Common myeloid progenitor, CD34-positive (primary cell): ENCODE measurements at regions of chr5 and their contacts with region 1.

Region 1: GRCh38 chr5:179763215-179763945 is 30.4 kb upstream of the LTC4S start:
- DNase-seq: peak; percentile 63 to 81 (median 78)
- H3K4me3 ChIP-seq: no peak overlapping the region
- H3K27ac ChIP-seq: no peak overlapping the region
- H3K4me1 ChIP-seq: peaks cover 17 to 75% (median 63%) of the 10 kb centered on the region in 4 experiments
- H3K27me3 ChIP-seq: no peaks in the 10 kb centered on the region

Region 2: DNA sequence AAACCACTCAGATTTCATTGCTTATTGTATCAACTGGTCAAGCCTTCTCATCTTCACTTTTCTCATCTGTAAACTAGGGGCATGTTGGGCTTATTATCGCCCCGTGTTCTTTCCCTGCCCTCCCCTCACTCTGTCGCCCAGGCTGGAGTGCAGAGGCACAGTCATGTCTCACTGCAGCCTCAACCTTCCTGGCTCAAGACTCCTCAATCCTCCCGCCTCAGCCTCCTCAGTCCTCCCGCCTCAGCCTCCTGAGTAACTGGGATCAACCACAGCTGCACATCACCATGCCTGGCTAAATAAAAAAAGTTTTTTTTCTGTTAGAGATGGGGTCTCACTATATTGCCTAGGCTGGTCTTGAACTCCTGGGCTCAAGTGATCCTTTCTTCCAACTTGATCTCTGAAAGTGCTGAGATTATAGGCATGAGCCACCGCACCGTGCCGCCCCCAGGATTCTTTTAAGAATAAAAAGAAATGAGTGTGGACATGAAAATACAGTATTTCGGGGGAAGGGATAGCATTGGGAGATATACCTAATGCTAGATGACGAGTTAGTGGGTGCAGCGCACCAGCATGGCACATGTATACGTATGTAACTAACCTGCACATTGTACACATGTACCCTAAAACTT is 28.7 kb before region 1 on chr5:
- CTCF ChIA-PET with region 1: interaction called, 24 read pairs
- POLR2A ChIA-PET with region 1: no interaction called
- DNase-seq: no peak
- H3K4me3 ChIP-seq: peak overlapping the region in 5 of 7 experiments; percentile 78 to 96 (median 94)
- H3K27ac ChIP-seq: peak overlapping the region in 1 of 2 experiments; percentile 93
- H3K4me1 ChIP-seq: peaks cover 14 to 29% (median 23%) of the 10 kb centered on the region in 4 experiments
- H3K27me3 ChIP-seq: no peaks in the 10 kb centered on the region

Region 3: GRCh38 chr5:179749857-179750508 is 13.4 kb before region 1 on chr5:
- CTCF ChIA-PET with region 1: interaction called, 26 read pairs
- POLR2A ChIA-PET with region 1: no interaction called
- DNase-seq: no peak
- H3K4me3 ChIP-seq: no peak overlapping the region
- H3K27ac ChIP-seq: no peak overlapping the region
- H3K4me1 ChIP-seq: peaks cover 0 to 4% (median 0%) of the 10 kb centered on the region in 4 experiments
- H3K27me3 ChIP-seq: no peaks in the 10 kb centered on the region

Region 4: DNA sequence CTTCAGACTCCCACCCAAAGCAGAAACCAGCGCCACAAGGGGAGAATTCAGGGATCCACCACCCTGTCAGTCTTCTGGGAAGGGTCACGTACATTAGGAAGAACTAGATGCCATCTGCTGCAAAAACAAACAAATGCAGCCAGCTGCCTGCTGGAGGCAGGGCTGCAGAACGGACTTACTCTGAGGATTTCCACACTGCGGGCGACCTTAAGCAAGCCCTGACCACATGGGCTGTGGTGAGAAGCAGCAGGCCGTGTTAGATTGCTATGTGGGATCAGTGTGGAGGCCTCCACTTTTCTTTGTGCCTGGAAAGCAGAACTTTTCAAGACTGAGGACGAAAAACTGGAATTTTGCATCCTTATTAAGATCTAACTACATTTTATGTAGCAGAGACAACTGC is 17.0 kb after region 1 on chr5:
- CTCF ChIA-PET with region 1: interaction called, 139 read pairs
- POLR2A ChIA-PET with region 1: no interaction called
- DNase-seq: no peak
- H3K4me3 ChIP-seq: no peak overlapping the region
- H3K27ac ChIP-seq: no peak overlapping the region
- H3K4me1 ChIP-seq: peaks cover 0 to 33% (median 10%) of the 10 kb centered on the region in 4 experiments
- H3K27me3 ChIP-seq: no peaks in the 10 kb centered on the region

Region 5: DNA sequence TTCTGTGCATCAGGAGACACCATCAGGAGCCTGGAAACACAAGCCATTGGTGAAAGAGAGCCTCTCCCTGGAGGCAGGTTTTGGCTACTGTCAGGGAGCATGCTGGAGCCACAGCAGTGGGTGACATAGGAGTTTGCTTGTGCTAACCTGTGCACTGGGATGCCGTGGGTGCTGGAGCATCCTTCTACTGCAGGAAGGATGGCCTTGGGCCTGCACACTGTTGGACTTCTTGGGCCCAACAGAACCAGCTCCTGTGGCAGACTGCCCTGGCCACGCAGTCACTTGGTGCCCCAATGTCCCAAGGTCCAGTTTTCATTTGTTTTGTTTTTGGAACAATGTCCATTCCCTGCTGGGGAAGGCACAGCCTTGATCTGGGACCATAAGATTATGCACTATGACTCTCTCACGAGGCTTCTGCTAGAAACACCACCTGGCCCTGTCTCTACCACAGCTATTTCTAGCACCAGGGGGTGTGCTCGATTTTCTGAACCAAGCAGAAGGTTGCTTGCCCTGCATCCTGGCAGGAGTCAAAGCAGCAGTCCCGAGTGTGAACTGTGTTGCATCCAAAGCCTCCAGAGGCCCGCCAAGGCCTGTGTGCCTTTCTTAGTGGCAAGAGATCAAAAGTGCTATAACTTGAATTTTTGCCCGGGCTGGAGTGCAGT is 24.9 kb after region 1 on chr5:
- CTCF ChIA-PET with region 1: interaction called, 211 read pairs
- POLR2A ChIA-PET with region 1: interaction called, 4 read pairs
- DNase-seq: no peak
- H3K4me3 ChIP-seq: no peak overlapping the region
- H3K27ac ChIP-seq: no peak overlapping the region
- H3K4me1 ChIP-seq: peaks cover 0 to 22% (median 21%) of the 10 kb centered on the region in 4 experiments
- H3K27me3 ChIP-seq: no peaks in the 10 kb centered on the region

Region 6: DNA sequence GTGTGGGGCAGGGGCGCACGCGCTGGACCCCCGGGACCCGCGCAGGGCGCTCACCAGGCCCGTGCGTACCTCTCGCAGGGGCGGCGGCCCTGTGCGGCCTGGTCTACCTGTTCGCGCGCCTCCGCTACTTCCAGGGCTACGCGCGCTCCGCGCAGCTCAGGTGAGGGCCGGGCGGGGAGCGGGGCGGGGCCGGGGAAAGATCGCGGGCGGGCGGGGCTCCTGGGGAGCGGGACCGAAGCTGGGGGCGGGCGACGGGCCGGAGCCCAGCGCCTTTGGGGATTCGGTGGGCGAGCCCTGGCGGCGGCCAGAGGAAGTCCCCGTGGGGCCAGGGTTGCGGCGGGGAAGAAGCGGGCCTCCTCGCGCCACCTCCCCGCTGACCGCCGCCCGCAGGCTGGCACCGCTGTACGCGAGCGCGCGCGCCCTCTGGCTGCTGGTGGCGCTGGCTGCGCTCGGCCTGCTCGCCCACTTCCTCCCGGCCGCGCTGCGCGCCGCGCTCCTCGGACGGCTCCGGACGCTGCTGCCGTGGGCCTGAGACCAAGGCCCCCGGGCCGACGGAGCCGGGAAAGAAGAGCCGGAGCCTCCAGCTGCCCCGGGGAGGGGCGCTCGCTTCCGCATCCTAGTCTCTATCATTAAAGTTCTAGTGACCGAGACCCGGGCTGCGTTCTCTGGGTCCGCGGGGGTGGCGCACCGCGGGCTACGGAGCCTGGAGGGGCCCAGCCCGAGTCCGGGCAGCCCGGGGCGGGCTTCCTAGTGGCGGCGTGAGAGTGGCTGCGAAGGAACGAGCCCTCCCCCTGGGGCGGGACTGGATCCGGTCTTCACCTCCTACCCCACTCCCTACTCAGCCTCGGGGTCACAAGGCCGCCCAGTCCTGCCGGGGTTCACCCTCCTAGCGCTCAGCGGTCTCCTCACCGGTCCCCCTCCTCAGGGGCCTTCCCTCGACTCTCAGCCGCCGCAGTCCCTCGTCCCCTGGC is 32.8 kb after region 1 on chr5:
- CTCF ChIA-PET with region 1: interaction called, 211 read pairs
- POLR2A ChIA-PET with region 1: interaction called, 9 read pairs
- DNase-seq: peak; percentile 69 to 89 (median 76)
- H3K4me3 ChIP-seq: peak overlapping the region; percentile 28 to 76 (median 66)
- H3K27ac ChIP-seq: peak overlapping the region in 1 of 2 experiments; percentile 34
- H3K4me1 ChIP-seq: peaks cover 5 to 56% (median 54%) of the 10 kb centered on the region in 4 experiments
- H3K27me3 ChIP-seq: no peaks in the 10 kb centered on the region

Region 7: DNA sequence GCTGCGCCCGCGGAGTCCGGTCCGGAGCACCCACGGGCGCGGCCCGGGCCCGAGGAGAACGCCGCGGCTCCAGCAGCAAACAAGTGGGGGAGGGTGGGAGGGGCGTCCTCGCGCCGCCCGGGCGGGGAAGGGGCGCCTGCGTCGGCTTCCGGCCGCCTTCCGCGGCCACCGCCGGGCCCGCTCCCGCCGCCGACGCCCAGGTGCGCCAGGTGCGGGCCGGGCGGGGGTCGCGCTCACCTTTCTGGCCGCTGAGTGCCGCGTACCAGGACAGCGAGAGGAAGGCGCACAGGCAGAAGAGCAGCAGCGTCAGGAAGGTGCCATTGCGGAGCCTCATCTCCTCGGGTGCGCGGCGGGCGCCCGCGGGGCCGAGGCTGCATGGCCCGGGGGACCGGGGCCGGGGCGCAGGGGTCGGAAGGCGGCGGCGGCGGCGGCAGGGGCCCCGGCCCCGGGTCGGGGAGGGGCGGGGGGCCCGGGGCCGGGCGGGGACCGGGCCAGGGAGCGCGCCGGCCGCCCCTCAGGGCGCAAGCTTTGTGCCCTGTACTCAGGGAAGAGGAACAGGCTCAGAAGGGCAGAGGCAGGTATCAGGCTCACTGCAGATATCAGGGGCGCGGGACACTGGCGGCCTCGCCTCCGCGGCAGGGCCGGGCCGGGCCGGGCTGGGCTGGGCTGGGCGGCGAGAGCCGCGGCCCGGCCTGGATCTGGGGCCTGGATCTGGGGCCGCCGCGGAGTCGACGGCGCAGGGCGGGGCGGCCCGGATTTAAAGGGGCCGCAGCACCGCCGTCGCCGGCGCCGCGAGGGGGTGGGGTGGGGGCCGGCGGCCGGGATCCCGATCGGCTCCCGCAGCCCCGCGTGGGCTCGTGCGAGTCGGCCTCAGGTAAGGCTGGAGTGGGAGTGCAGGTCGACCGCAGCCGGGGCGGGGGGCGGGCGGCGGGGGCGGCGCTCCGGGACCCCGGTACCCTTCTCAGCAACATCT is 43.2 kb after region 1 on chr5 and contains the start of gene MGAT4B:
- CTCF ChIA-PET with region 1: interaction called, 29 read pairs
- POLR2A ChIA-PET with region 1: no interaction called
- DNase-seq: peak in 2 of 3 donors; percentile 74 to 82
- H3K4me3 ChIP-seq: peak within 1 kb of the TSS; percentile 65 to 83 (median 75)
- H3K27ac ChIP-seq: peak within 1 kb of the TSS in 1 of 2 experiments; percentile 64
- H3K4me1 ChIP-seq: peaks cover 4 to 49% (median 41%) of the 10 kb centered on the region in 4 experiments
- H3K27me3 ChIP-seq: no peaks in the 10 kb centered on the region